ENCODE measurements at regions of chr9 and their contacts with region 1.

Region 1: DNA sequence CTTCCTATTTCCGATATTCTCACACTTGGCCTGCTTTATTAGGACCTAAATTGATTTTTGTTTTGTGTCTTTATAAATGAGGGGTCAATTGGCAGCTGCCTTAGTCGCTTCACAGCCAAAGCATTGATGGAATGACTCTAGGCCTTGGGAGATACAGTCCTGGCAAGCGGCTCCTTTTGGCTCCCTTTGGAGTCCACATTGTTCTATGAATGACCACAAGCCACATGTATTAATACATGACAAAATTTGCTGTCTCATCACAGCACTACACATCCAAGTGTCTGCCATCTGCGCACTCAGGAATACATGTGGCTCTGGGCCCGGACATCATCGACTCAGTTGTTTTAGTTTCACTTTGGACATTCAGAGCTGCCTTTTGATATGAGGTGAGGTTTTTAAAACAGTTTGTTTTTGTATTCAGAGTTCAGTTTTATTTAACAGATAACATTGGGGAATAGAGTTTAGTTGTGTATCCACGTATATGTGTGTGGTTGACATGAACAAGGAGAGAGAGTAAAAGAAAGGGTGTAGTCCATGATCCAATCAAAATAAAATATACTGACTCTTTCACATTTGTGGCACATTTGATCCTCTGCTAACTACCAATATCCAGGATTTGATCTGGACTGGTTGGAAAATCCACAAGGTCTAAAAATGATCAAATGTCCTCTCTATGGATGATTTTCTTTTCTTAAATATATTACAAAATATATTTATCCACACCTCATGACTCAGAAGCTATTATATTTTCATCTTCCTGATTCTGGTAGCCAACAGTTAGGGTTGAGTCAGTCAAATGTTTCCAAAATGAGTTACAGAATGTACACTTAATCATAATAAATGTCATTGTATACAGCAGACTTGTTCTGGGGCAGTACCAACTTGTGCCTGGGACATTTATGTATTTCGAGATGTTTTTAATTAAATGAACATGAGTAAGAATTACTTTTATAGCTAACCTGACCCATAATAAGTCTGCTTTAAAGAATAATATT is 114.0 kb upstream of the MTAP start:
- DNase-seq: peak; percentile 87
- H3K4me3 ChIP-seq: peak overlapping the region; percentile 12 to 37 (median 32)
- H3K27ac ChIP-seq: peak overlapping the region; percentile 97
- H3K4me1 ChIP-seq: peaks cover 67% of the 10 kb centered on the region
- H3K27me3 ChIP-seq: no peaks in the 10 kb centered on the region
- CTCF ChIP-seq: no peak

Region 2: GRCh38 chr9:21334701-21335632 is 353.4 kb before region 1 on chr9 and contains the start of gene KLHL9:
- CTCF ChIA-PET with region 1: no interaction called
- dilution Hi-C with region 1: no loop called
- in situ Hi-C with region 1: no loop called
- intact Hi-C with region 1: loop called (anchors 10 kb)
- DNase-seq: peak; percentile 89
- H3K4me3 ChIP-seq: peak within 1 kb of the TSS; percentile 46 to 67 (median 65)
- H3K27ac ChIP-seq: peak within 1 kb of the TSS; percentile 96
- H3K4me1 ChIP-seq: peaks cover 26% of the 10 kb centered on the region
- H3K27me3 ChIP-seq: no peaks in the 10 kb centered on the region
- CTCF ChIP-seq: no peak
- total RNA-seq, gene KLHL9: 15.7 to 24.7 TPM

Region 3: DNA sequence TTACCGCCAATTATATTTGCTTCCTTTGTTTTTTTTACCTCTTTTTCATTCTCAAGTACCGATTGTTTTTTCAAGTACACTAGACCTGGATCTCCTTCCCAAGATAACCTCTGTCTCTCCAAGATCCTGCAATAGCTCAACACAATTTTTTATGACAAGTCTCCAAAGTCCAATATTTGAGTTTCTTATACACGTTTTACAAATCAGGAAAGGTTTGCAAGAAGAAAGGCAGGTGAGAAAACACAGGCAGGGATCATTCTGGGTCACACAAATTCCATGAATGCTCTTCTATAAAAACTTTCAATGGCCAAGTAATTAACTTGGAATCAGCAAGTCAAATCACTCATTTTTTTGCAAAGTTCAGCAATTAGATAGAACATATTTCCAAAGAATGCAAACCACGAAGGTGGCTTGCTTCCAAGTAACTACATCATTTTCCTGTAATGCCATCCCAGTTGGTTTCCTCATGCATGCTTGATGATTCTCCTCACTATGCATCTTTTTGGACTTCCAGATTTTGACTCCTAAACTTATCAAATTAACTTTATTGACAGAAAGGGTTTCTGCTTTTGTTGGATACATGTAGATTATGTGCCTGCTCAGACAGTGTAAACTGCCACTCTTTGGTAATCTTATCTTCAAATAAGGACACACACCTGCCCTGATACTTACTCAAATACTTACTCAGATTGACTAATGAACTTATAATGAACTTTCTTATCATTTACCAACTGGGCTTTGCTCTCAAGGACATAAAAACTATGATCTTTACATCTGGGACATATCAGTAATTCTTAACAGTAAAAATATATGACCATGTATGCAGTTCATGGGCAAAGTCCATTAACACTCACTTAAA is 181.6 kb before region 1 on chr9:
- CTCF ChIA-PET with region 1: no interaction called
- dilution Hi-C with region 1: no loop called
- in situ Hi-C with region 1: no loop called
- intact Hi-C with region 1: loop called (anchors 5 kb)
- DNase-seq: peak; percentile 76
- H3K4me3 ChIP-seq: no peak overlapping the region
- H3K27ac ChIP-seq: peak overlapping the region; percentile 18
- H3K4me1 ChIP-seq: peaks cover 56% of the 10 kb centered on the region
- H3K27me3 ChIP-seq: no peaks in the 10 kb centered on the region
- CTCF ChIP-seq: no peak

Region 4: DNA sequence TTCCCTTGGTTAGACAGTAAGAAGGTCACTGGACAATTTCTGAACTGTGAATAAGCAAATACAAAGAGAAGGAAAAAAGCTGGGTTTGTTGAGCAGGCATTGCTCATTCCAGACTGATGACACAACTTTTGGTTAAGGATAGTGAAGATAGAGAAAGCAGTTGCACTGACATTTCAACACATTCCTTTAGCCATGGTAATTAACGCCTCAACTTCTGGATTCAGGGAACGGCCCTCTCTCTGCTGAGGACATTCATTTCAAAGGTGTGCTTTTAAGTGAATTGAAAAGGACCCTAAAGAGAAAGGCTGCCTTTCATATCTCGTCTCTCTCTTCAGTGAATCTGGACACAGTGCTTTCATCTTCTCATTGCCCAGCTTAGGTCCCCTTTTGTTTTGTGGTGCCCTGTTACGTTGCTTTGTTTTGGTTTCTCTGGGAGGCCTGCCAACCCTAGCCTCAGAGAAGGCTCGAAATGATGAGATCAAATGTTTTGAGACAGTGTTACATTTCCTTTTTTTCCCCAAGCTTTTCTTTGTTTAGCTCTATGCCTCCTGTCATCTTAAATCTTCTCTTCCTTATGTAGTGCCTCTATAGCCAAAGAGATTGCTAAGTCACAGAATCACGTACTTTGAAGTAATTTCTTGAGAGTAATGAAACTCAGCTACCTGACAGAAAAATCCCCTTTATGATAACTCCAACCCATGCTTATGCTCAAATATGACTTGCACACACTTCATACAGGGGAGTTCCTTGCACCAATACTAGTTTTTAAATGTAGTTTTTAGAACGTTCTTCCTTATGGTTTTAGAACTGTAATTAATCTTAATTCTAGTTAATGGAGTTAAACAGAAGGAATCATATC is 111.8 kb before region 1 on chr9:
- CTCF ChIA-PET with region 1: interaction called, 3 read pairs
- dilution Hi-C with region 1: no loop called
- in situ Hi-C with region 1: loop called in 1 of 2 experiments (anchors 10 kb)
- intact Hi-C with region 1: loop called (anchors 2 kb)
- DNase-seq: peak; percentile 90
- H3K4me3 ChIP-seq: peak overlapping the region; percentile 29 to 48 (median 36)
- H3K27ac ChIP-seq: peak overlapping the region; percentile 96
- H3K4me1 ChIP-seq: peaks cover 30% of the 10 kb centered on the region
- H3K27me3 ChIP-seq: no peaks in the 10 kb centered on the region
- CTCF ChIP-seq: no peak

Region 5: GRCh38 chr9:21616082-21616778 is 72.2 kb before region 1 on chr9:
- CTCF ChIA-PET with region 1: no interaction called
- dilution Hi-C with region 1: no loop called
- in situ Hi-C with region 1: no loop called
- intact Hi-C with region 1: loop called (anchors 1 kb)
- DNase-seq: peak; percentile 94
- H3K4me3 ChIP-seq: no peak overlapping the region
- H3K27ac ChIP-seq: peak overlapping the region; percentile 71
- H3K4me1 ChIP-seq: peaks cover 37% of the 10 kb centered on the region
- H3K27me3 ChIP-seq: no peaks in the 10 kb centered on the region
- CTCF ChIP-seq: no peak

Region 6: GRCh38 chr9:21709464-21710058 is 21.2 kb after region 1 on chr9:
- CTCF ChIA-PET with region 1: interaction called, 7 read pairs
- dilution Hi-C with region 1: no loop called
- in situ Hi-C with region 1: no loop called
- intact Hi-C with region 1: loop called (anchors 2 kb)
- DNase-seq: peak; percentile 57
- H3K4me3 ChIP-seq: no peak overlapping the region
- H3K27ac ChIP-seq: no peak overlapping the region
- H3K4me1 ChIP-seq: peaks cover 37% of the 10 kb centered on the region
- H3K27me3 ChIP-seq: no peaks in the 10 kb centered on the region
- CTCF ChIP-seq: peak; percentile 83 to 96

Region 7: DNA sequence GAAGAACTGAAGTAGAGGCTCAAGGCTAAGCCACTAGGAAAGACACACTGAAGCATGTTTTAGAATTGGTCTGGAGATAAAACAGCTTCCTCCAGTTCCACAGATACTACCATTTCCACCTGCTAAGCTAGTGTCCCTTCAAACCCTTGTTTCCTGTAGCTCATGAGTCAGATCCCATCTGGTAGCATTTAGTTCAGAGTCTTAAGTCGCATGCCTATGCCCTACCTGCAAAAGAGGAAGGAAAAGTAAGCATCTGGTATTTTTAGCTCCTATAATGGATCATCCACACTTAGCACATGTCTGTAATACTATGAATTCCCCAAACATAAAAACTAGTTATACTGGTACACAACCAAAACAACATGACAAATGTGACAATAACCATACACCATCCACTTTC is 213.7 kb after region 1 on chr9:
- CTCF ChIA-PET with region 1: no interaction called
- dilution Hi-C with region 1: no loop called
- in situ Hi-C with region 1: no loop called
- intact Hi-C with region 1: no loop called
- DNase-seq: no peak
- H3K4me3 ChIP-seq: no peak overlapping the region
- H3K27ac ChIP-seq: no peak overlapping the region
- H3K4me1 ChIP-seq: no peaks in the 10 kb centered on the region
- H3K27me3 ChIP-seq: no peaks in the 10 kb centered on the region
- CTCF ChIP-seq: no peak